ENCODE measurements at regions of chr7 and their contacts with region 1.

Region 1: DNA sequence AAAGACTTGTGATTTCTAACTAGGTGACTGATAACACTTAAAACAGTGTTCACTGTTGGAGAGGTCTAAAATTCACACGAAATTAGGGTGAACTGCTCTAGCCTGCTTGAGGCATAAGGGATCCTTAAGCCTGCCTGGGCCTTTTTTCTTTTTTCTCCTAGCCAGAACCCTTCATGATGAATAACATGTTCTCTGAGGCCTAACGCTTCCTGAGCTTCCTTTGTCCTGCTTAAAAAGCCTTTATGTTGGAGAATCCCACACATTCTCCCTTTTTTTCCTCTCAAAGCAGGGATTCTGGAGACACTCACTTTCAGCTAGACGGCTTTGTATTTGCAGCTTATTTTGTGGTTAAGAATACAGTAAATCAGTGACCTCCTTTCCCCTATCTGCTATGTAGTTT is 354.7 kb upstream of the PHF14 start:
- DNase-seq: no peak
- H3K4me3 ChIP-seq: no peak overlapping the region
- H3K27ac ChIP-seq: no peak overlapping the region
- H3K4me1 ChIP-seq: no peaks in the 10 kb centered on the region
- H3K27me3 ChIP-seq: no peaks in the 10 kb centered on the region
- CTCF ChIP-seq: no peak
- EP300 ChIP-seq: no peak
- POLR2A ChIP-seq: no peak

Region 2: DNA sequence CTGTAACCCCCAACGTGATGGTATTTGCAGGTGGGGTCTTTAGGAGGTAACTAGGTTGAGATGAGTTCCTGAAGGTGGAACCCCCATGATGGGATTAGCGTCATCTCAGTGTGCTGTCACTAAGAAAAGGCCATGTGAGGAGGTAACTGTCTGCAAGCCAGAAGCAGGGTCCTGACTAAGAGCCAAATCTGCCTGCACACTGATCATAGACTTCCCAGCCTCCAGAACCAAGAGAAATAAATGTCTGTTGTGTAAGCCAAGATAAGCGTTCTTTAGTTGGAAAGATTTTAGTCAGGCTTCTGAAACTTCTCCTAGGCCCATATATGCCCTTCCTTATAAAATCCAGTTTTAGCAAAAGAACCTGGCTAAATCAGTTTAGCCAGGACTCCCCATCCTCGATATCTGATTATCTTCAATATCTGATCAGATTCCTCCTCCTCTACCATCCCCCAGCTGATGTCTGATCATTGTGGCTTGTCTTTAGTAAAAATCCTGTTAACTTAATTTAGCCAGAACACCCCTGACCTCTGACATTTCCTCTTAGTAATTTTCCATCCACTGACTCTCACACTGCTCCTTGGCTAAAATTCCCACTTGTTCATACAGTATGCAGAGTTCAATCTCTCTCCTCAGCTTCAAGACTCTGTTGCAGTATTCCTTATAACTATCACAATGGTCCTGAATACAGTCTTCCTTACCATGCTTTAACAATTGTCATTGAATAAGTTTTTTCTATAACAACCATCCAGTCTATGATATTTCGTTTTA is 480.7 kb before region 1 on chr7:
- intact Hi-C with region 1: no loop called
- DNase-seq: no peak
- H3K4me3 ChIP-seq: no peak overlapping the region
- H3K27ac ChIP-seq: no peak overlapping the region
- H3K4me1 ChIP-seq: no peaks in the 10 kb centered on the region
- H3K27me3 ChIP-seq: no peaks in the 10 kb centered on the region
- CTCF ChIP-seq: no peak
- EP300 ChIP-seq: no peak
- POLR2A ChIP-seq: no peak

Region 3: GRCh38 chr7:12601302-12601869 is 1982.5 kb after region 1 on chr7:
- intact Hi-C with region 1: loop called in 1 of 4 experiments (anchors 10 kb)
- DNase-seq: no peak
- H3K4me3 ChIP-seq: no peak overlapping the region
- H3K27ac ChIP-seq: no peak overlapping the region
- H3K4me1 ChIP-seq: no peaks in the 10 kb centered on the region
- H3K27me3 ChIP-seq: no peaks in the 10 kb centered on the region
- CTCF ChIP-seq: no peak
- EP300 ChIP-seq: no peak
- POLR2A ChIP-seq: no peak